ENCODE measurements at regions of chr2 and their contacts with region 1.

Region 1: GRCh38 chr2:222038067-222038802 is 260.6 kb downstream of the PAX3 start:
- DNase-seq: no peak
- H3K4me3 ChIP-seq: no peak overlapping the region
- H3K27ac ChIP-seq: no peak overlapping the region
- H3K4me1 ChIP-seq: peaks cover 12% of the 10 kb centered on the region
- H3K27me3 ChIP-seq: no peaks in the 10 kb centered on the region
- CTCF ChIP-seq: peak; percentile 91

Region 2: DNA sequence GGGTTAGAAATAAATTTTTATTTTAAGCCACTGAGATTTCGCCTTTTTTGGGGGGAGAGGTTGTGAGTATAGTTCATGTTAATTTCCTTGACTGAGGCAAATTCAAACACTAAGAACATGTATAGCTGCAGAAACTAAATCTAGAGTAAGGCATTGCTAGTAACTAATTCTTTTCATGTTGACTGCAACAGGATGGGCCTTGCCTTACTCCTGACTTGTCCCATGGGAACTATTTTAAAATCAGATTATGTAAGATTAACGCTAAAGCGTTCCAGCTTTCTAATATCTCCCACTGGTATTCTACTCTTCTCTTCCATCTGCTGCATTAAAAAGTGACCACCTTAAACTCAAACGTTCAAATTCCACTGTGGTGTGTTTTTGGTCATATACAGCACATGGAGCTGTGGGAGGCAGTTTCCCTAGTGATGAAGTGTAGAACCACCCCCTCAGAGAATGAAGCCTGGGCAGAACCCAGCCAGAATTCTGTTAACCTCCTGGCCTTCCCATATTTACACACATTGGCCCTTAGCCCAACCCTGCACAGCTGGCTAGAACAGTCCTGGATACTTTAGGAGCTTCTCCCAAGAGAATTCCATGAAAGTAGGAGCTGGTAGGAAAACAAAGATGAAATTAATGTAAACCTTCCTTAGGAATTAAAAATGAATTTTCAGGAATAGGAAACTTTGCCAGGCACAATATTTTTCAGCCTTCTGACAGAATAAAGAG is 1723.0 kb before region 1 on chr2:
- CTCF ChIA-PET with region 1: no interaction called
- POLR2A ChIA-PET with region 1: no interaction called
- intact Hi-C with region 1: no loop called
- DNase-seq: no peak
- H3K4me3 ChIP-seq: no peak overlapping the region
- H3K27ac ChIP-seq: no peak overlapping the region
- H3K4me1 ChIP-seq: no peaks in the 10 kb centered on the region
- H3K27me3 ChIP-seq: no peaks in the 10 kb centered on the region
- CTCF ChIP-seq: no peak

Region 3: GRCh38 chr2:222232372-222232771 is 194.1 kb after region 1 on chr2:
- CTCF ChIA-PET with region 1: no interaction called
- POLR2A ChIA-PET with region 1: interaction called, 11 read pairs
- intact Hi-C with region 1: no loop called
- DNase-seq: no peak
- H3K4me3 ChIP-seq: no peak overlapping the region
- H3K27ac ChIP-seq: no peak overlapping the region
- H3K4me1 ChIP-seq: no peaks in the 10 kb centered on the region
- H3K27me3 ChIP-seq: peaks cover 43% of the 10 kb centered on the region
- CTCF ChIP-seq: no peak

Region 4: DNA sequence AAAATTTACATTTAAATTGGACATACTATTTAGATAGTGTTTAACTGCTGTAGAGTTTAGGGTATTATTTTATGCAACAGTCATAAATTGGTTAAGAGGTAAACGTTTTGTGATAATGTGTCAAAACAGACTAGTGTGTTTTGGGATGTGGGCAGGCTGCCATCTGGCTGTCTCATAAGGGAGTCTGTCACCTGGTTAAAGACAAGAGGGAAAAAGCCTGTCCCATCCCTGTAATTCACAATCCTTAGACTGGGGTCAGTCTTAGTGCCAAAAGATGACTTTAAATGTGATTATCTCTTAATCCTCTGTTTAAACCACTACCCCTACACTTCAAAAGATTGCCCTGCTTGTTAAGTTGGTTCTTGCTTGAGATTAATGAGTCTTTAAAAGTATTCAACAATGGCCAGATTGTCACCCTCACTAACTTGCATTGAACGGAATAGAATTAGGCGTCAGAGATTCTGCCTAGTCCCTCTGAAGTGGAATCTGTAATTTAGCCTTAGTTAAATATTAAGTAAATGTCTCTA is 445.3 kb after region 1 on chr2:
- CTCF ChIA-PET with region 1: no interaction called
- POLR2A ChIA-PET with region 1: no interaction called
- intact Hi-C with region 1: no loop called
- DNase-seq: peak in 1 of 2 experiments; percentile 26
- H3K4me3 ChIP-seq: no peak overlapping the region
- H3K27ac ChIP-seq: no peak overlapping the region
- H3K4me1 ChIP-seq: no peaks in the 10 kb centered on the region
- H3K27me3 ChIP-seq: no peaks in the 10 kb centered on the region
- CTCF ChIP-seq: peak; percentile 35

Measured in PC-9 (cell line).